ENCODE measurements at regions of chr11 and their contacts with region 1.

Region 1: GRCh38 chr11:69101115-69101791 is 52.5 kb downstream of the TPCN2 start:
- DNase-seq: peak; percentile 56 to 88 (median 72)
- ATAC-seq: peak; percentile 99
- H3K4me3 ChIP-seq: no peak overlapping the region
- H3K4me3 Mint-ChIP-seq: no peak overlapping the region
- H3K27ac ChIP-seq: no peak overlapping the region
- H3K27ac Mint-ChIP-seq: no peak overlapping the region
- H3K4me1 ChIP-seq: peaks cover 7% of the 10 kb centered on the region
- H3K4me1 Mint-ChIP-seq: peaks cover 4% of the 10 kb centered on the region
- H3K27me3 ChIP-seq: peaks cover 0 to 6% of the 10 kb centered on the region in 2 experiments
- H3K27me3 Mint-ChIP-seq: no peaks in the 10 kb centered on the region
- CTCF ChIP-seq: peak; percentile 95

Region 2: DNA sequence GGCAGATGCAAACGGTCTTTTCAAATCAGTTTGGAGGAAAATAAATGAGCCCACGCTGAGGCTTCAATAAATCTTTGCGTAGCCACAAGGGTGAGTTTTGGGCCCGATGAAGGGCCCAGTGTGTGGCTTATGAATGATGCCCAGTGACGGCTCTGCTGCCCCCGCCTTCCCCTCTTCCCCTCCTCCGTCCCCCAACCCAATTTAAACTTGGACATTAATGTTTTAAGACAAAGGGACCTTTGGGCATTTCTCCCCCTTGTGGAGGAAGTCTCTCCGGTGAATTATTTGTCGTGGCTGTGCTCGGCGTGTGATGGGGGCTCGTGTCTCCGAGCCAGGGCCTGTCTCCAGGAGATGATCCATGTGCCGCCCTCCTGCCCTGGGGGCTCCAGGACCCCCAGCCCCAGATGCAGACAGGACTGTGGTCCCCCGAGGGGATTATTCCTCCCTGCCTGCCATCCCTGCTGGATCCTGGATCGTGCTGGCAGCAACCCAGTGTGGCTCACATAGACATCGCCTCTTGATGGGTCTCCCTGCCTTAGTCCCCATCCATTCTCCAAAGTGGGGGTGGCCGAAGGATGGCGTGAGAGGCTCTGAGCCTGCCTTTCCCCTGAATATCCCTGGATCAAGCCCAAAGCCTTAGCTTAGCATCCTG is 110.8 kb after region 1 on chr11:
- CTCF ChIA-PET with region 1: no interaction called
- POLR2A ChIA-PET with region 1: no interaction called
- intact Hi-C with region 1: loop called (anchors 2 to 5 kb)
- DNase-seq: peak in 1 of 14 experiments; percentile 17
- ATAC-seq: no peak
- H3K4me3 ChIP-seq: no peak overlapping the region
- H3K4me3 Mint-ChIP-seq: no peak overlapping the region
- H3K27ac ChIP-seq: no peak overlapping the region
- H3K27ac Mint-ChIP-seq: no peak overlapping the region
- H3K4me1 ChIP-seq: peaks cover 4% of the 10 kb centered on the region
- H3K4me1 Mint-ChIP-seq: peaks cover 11% of the 10 kb centered on the region
- H3K27me3 ChIP-seq: no peaks in the 10 kb centered on the region
- H3K27me3 Mint-ChIP-seq: peaks cover 6% of the 10 kb centered on the region
- CTCF ChIP-seq: peak; percentile 18

Region 3: DNA sequence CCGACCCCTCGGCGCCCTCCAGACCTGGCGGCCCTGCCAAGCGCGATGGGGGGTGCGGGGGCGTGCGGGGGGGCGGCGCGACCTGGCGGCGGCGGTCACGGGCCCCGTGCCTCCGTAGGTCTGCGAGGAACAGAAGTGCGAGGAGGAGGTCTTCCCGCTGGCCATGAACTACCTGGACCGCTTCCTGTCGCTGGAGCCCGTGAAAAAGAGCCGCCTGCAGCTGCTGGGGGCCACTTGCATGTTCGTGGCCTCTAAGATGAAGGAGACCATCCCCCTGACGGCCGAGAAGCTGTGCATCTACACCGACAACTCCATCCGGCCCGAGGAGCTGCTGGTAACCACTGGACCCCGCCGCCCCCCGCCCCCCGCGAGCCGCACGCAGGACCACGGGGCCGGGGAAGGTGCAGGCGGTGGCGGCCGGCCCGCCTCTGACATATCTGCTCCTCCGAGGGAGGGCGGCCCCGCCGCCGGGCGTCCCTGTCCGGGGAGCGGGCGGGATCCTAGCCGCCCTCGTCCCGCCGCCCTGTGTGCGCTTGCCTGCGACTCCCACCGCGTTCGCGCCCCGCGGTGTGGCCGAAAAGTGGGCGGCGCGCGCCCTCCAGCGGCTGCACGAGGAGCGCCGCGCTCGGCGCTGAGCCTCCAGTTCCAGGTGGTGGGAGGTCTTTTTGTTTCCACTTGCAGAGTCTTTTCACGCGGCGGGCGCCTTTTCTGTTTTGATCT is 541.8 kb after region 1 on chr11:
- CTCF ChIA-PET with region 1: interaction called, 9 read pairs
- POLR2A ChIA-PET with region 1: interaction called, 3 read pairs
- intact Hi-C with region 1: loop called (anchors 1 kb)
- DNase-seq: peak; percentile 55 to 90 (median 74)
- ATAC-seq: peak; percentile 77
- H3K4me3 ChIP-seq: peak overlapping the region; percentile 64
- H3K4me3 Mint-ChIP-seq: peak overlapping the region; percentile 85
- H3K27ac ChIP-seq: no peak overlapping the region
- H3K27ac Mint-ChIP-seq: no peak overlapping the region
- H3K4me1 ChIP-seq: peaks cover 44% of the 10 kb centered on the region
- H3K4me1 Mint-ChIP-seq: peaks cover 31% of the 10 kb centered on the region
- H3K27me3 ChIP-seq: peaks cover 31 to 34% of the 10 kb centered on the region in 2 experiments
- H3K27me3 Mint-ChIP-seq: peaks cover 34% of the 10 kb centered on the region
- CTCF ChIP-seq: peak; percentile 92

Region 4: DNA sequence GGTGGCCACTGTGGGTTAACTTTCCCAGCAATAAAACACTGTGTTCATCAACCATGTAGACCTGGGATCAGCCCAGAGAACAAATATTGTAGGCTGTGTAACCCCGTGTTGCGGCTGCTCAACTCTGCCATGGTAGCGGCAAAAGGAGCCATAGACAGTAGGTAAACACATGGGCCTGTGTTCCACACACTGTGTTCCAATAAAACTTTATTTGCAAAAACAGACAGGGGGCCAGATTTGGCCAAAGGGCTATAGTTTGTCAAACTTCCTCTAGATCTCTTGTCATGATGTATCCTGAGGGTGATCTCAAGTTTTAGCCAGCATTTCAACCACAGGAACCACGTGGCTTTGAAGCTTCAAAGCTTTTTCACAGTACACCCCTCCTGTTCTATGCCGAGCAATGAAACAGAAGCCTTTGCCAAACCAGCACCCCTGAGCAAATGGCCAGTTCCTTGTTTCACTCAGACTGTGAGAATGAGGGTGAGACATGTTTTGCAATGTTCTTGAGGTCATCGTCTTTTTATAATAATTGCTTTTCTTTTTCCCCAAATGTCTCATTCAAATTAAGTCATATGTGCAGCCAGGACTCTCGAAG is 1052.0 kb after region 1 on chr11:
- CTCF ChIA-PET with region 1: no interaction called
- POLR2A ChIA-PET with region 1: no interaction called
- intact Hi-C with region 1: no loop called
- DNase-seq: no peak
- ATAC-seq: no peak
- H3K4me3 ChIP-seq: no peak overlapping the region
- H3K4me3 Mint-ChIP-seq: no peak overlapping the region
- H3K27ac ChIP-seq: no peak overlapping the region
- H3K27ac Mint-ChIP-seq: no peak overlapping the region
- H3K4me1 ChIP-seq: no peaks in the 10 kb centered on the region
- H3K4me1 Mint-ChIP-seq: no peaks in the 10 kb centered on the region
- H3K27me3 ChIP-seq: no peaks in the 10 kb centered on the region
- H3K27me3 Mint-ChIP-seq: peaks cover 2% of the 10 kb centered on the region
- CTCF ChIP-seq: no peak